ENCODE measurements at regions of chr1 and their contacts with region 1.

Region 1: GRCh38 chr1:235225299-235225698 is 64.2 kb upstream of the RBM34 start:
- DNase-seq: no peak
- ATAC-seq: no peak
- H3K4me3 ChIP-seq: no peak overlapping the region
- H3K4me3 Mint-ChIP-seq: no peak overlapping the region
- H3K27ac ChIP-seq: no peak overlapping the region
- H3K27ac Mint-ChIP-seq: no peak overlapping the region
- H3K4me1 ChIP-seq: no peaks in the 10 kb centered on the region
- H3K4me1 Mint-ChIP-seq: peaks cover 5% of the 10 kb centered on the region
- H3K27me3 ChIP-seq: no peaks in the 10 kb centered on the region
- H3K27me3 Mint-ChIP-seq: no peaks in the 10 kb centered on the region
- CTCF ChIP-seq: no peak

Region 2: DNA sequence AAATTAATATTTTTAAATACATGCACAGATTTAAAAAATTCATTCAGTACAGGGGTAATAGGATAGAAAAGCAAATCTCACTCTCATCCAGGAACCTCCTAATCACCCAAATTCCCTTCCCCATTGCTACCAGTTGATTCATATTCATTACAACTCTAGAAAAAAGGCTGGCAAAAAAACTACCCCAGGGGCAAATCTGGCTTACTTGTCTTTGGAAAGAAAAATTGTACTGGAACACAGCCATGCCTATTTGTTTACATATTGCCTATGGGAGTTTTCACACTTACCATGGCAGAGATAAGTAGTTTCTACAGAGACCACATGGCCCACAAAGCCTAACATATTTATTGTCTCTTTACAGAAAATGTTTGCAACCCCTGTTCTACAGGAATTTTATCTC is 55.3 kb before region 1 on chr1:
- CTCF ChIA-PET with region 1: no interaction called
- POLR2A ChIA-PET with region 1: no interaction called
- intact Hi-C with region 1: loop called in 1 of 2 experiments (anchors 10 kb)
- DNase-seq: no peak
- ATAC-seq: no peak
- H3K4me3 ChIP-seq: no peak overlapping the region
- H3K4me3 Mint-ChIP-seq: no peak overlapping the region
- H3K27ac ChIP-seq: no peak overlapping the region
- H3K27ac Mint-ChIP-seq: no peak overlapping the region
- H3K4me1 ChIP-seq: no peaks in the 10 kb centered on the region
- H3K4me1 Mint-ChIP-seq: no peaks in the 10 kb centered on the region
- H3K27me3 ChIP-seq: no peaks in the 10 kb centered on the region
- H3K27me3 Mint-ChIP-seq: no peaks in the 10 kb centered on the region
- CTCF ChIP-seq: no peak